ENCODE measurements at regions of chr13 and their contacts with region 1.

Region 1: DNA sequence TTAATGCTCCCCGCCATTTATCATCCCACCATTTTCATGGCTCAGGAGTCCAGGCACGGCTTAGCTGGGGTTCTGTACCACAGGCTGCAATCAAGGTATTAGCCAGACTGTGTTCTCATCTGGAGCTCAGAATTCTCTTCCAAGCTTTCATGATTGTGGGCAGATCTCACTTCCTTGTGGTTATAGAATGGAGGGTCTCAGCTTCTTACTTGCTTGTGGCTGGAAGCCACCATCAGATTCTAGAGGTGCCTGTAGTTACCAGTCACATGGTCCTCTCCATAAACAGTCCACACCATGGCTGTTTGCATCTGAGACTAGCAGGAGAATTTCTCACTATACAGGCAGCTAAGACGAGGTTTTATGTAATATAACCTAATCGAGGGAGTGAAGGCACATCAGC is 45.1 kb upstream of the SLC46A3 start:
- DNase-seq: no peak
- H3K4me3 ChIP-seq: no peak overlapping the region
- H3K27ac ChIP-seq: no peak overlapping the region
- H3K4me1 ChIP-seq: peaks cover 0 to 7% (median 0%) of the 10 kb centered on the region in 4 experiments
- H3K27me3 ChIP-seq: no peaks in the 10 kb centered on the region

Region 2: DNA sequence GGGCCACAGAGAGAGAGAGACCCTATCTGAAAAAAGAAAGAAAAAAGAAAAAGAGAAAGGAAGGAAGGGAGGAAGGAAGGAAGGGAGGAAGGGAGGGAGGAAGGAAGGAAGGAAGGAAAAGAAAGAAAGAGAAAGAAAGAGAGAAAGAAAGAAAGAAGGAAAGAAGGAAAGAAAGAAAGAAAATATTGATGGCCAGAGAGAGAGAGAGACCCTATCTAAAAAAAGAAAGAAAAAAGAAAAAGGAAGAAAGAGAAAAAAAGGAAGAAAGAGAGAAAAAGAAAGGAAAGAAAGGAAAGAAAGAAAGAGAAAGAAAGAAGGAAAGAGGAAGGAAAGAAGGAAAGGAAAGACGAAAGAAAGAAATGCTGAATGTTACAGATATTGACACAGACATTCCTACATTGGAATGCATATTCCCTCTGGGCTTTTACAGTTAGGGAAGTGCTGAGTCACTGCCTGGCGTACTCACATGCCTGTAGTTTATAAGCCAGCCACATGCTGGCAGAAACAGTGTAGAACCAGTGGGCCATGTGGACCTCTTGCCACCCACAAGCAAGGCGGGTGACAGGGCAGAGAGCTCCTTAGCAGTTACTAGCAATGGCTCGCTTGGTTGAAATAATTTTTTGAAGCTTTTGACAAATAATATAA is 10.5 kb before region 1 on chr13:
- CTCF ChIA-PET with region 1: interaction called, 11 read pairs
- POLR2A ChIA-PET with region 1: no interaction called
- DNase-seq: peak; percentile 44 to 86 (median 76)
- H3K4me3 ChIP-seq: no peak overlapping the region
- H3K27ac ChIP-seq: no peak overlapping the region
- H3K4me1 ChIP-seq: peaks cover 0 to 44% (median 30%) of the 10 kb centered on the region in 4 experiments
- H3K27me3 ChIP-seq: no peaks in the 10 kb centered on the region

Region 3: DNA sequence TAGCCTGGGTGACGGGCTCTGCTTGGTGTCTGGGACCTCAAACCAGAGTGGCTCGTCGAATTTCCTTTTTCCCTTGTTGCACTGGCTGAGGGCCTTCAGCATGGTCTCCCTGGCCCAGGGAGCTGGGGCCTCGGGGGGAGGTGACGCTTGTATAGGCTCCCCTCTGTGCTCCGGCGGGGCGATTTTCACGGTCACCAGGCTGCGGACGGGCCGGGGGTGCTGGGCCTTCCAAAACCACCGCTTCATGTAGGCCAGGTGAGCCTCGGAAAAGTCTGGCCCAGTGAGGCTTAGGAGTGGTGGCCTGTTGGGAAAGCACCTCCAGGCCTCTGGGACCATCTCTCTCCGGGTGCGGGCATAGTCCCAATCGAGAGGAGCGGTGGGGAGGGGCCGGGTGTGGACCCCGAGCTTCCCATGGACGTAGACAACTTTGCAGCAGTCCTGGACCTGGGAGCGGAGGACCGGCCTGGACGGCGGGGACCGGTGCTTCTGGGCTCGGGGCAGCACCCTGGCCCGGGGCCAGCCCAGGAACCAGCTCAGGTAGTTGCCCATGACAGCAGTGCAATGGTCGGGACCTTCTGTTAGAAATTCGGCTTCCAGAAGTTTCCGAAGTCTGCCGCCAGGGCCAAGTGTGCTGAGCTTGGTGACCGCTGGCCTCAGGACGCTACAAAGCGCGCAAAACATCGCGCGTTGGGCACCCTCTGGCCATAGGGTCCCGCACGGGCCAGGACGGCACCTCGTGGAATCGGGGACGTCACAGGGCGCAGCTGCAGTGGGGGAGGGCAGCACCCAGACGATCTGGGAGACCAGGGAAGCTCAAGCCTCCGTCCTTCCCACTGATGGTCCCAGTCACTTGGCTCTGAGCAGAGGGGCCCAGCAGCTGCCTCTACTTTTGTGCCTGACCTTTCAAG is 14.7 kb after region 1 on chr13:
- CTCF ChIA-PET with region 1: no interaction called
- POLR2A ChIA-PET with region 1: no interaction called
- DNase-seq: no peak
- H3K4me3 ChIP-seq: no peak overlapping the region
- H3K27ac ChIP-seq: no peak overlapping the region
- H3K4me1 ChIP-seq: no peaks in the 10 kb centered on the region
- H3K27me3 ChIP-seq: peaks cover 0 to 2% (median 0%) of the 10 kb centered on the region in 5 experiments

Region 4: GRCh38 chr13:29105777-29106176 is 341.9 kb after region 1 on chr13:
- CTCF ChIA-PET with region 1: no interaction called
- POLR2A ChIA-PET with region 1: no interaction called
- DNase-seq: no peak
- H3K4me3 ChIP-seq: no peak overlapping the region
- H3K27ac ChIP-seq: no peak overlapping the region
- H3K4me1 ChIP-seq: no peaks in the 10 kb centered on the region
- H3K27me3 ChIP-seq: no peaks in the 10 kb centered on the region